Dorsolateral prefrontal cortex (tissue), 120 donors: ENCODE measurements at regions of chr17 and their contacts with region 1.

Region 1: GRCh38 chr17:13594762-13595598 is 6.7 kb downstream of the HS3ST3A1 start:
- DNase-seq: peak in 7 of 10 donors; percentile 45 to 80 (median 67)
- H3K4me3 ChIP-seq: no peak overlapping the region
- H3K27ac ChIP-seq: no peak overlapping the region
- H3K27me3 ChIP-seq: peaks cover 0 to 45% (median 9%) of the 10 kb centered on the region in 45 donors
- CTCF ChIP-seq: peak; percentile 71 to 94 (median 88)

Region 2: DNA sequence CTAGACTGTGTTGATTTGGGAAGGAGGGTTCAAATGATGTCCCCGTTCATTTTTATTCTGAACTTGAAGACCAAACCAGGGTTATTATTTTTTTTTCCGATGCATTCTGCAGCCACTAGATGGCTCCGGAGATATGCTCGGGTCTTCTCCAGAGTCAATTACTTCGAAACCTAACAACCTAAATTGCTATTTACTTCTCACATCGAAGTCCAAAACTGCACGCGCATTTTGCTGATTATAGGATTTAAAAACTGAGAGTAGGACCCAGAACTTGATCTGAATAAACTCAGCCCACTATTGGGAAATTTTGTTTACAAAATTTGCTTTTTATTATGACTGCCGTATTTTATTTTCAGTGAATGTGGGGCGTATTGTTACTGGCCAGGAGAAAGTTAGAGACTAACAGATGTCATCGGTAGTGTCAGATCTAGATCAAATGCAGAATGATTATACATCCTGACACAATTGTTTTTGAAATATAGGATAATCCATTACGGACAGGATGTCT is 257.1 kb before region 1 on chr17:
- intact Hi-C with region 1: loop called (anchors 10 kb)
- DNase-seq: peak in 2 of 10 donors; percentile 12 to 24
- H3K4me3 ChIP-seq: peak overlapping the region in 48 of 59 donors; percentile 1 to 63 (median 40)
- H3K27ac ChIP-seq: no peak overlapping the region
- H3K27me3 ChIP-seq: peaks cover 0 to 46% (median 8%) of the 10 kb centered on the region in 45 donors
- CTCF ChIP-seq: peak; percentile 52 to 82 (median 66)

Region 3: GRCh38 chr17:13638855-13639458 is 44.0 kb after region 1 on chr17:
- intact Hi-C with region 1: no loop called
- DNase-seq: no peak
- H3K4me3 ChIP-seq: no peak overlapping the region
- H3K27ac ChIP-seq: no peak overlapping the region
- H3K27me3 ChIP-seq: peaks cover 0 to 7% (median 0%) of the 10 kb centered on the region in 45 donors
- CTCF ChIP-seq: no peak

Region 4: DNA sequence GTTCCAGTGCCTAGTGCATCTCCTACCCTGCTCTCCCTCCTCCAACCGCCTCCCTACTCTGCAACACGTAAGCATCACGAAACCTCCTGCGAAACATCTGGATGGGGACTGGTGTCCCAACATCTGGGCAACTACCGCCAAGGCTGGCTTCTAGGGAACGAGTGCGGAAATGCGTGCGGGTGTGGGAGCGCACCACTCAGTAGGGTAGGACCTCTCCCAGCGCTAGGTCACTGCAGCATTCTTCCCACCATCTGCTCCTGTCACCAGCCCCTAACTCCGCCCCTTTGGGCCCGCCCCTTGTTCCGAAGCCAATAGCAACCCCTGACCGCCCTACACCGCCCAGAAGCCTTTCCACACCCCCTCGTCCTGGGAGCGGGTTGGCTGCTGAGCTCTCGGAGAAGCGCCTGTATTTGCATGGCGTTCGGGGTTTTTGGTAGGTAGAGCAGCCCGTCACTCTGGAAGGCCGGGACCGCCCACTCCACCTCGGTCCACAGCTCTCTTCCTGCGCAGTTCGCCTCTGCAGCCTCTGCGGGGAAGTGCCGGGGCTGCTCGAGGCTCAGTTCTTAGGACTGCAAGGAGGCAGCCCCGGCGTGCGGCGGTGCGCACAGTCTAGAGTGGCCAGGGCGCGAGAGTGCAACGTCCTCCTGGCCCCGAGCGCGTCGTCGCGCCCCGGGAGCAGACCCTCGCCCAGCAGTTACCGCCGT is 705.7 kb after region 1 on chr17 and contains the start of gene HS3ST3B1:
- intact Hi-C with region 1: loop called (anchors 2 kb)
- DNase-seq: peak; percentile 45 to 96 (median 83)
- H3K4me3 ChIP-seq: peak within 1 kb of the TSS; percentile 23 to 70 (median 52)
- H3K27ac ChIP-seq: peak within 1 kb of the TSS in 9 of 59 donors; percentile 7 to 65 (median 33)
- H3K27me3 ChIP-seq: peaks cover 15 to 100% (median 97%) of the 10 kb centered on the region in 45 donors
- CTCF ChIP-seq: peak in 6 of 56 donors; percentile 3 to 29 (median 10)
- total RNA-seq, gene HS3ST3B1: 0.41 to 18.5 (median 1.9) TPM

Region 5: DNA sequence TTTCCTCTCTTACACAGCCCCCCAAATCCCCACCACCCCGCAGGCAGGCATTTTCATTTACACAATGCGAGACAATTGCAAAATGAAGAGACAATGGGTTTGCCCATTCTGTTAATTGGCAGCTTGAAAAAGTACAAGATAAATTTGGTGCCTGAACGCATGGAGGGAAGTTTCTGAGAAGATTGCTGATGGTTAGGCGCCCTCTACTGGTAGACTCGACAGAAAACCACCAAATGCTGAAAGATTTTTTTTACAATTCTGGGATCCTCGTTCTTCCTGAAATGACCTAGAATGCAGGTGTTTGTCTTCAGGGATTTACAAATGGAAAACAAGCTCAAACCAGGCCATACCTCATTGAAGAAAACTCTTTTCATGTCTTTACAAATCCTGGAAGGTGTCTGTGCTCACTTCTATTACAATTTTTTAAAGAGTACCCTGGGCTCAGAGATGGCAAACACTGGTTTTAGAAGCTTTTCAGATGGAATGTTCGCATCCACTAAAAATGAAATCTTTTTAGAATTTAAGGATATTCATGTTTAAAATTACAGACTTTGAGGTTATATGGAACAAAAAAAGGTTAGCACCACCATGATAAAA is 1331.6 kb after region 1 on chr17:
- intact Hi-C with region 1: loop called (anchors 2 to 5 kb)
- DNase-seq: peak in 5 of 10 donors; percentile 29 to 52 (median 35)
- H3K4me3 ChIP-seq: no peak overlapping the region
- H3K27ac ChIP-seq: no peak overlapping the region
- H3K27me3 ChIP-seq: peaks cover 0 to 16% (median 0%) of the 10 kb centered on the region in 45 donors
- CTCF ChIP-seq: peak; percentile 69 to 93 (median 84)

Region 6: GRCh38 chr17:15171167-15172047 is 1576.4 kb after region 1 on chr17:
- intact Hi-C with region 1: loop called in 1 of 2 experiments (anchors 5 kb)
- DNase-seq: peak; percentile 32 to 86 (median 76)
- H3K4me3 ChIP-seq: no peak overlapping the region
- H3K27ac ChIP-seq: no peak overlapping the region
- H3K27me3 ChIP-seq: peaks cover 0 to 7% (median 0%) of the 10 kb centered on the region in 45 donors
- CTCF ChIP-seq: peak; percentile 42 to 92 (median 86)